Activated CD4-positive, alpha-beta T cell treated with anti-CD3 and anti-CD28 coated beads for 36 hours (primary cell): ENCODE measurements at regions of chr11 and their contacts with region 1.

Region 1: DNA sequence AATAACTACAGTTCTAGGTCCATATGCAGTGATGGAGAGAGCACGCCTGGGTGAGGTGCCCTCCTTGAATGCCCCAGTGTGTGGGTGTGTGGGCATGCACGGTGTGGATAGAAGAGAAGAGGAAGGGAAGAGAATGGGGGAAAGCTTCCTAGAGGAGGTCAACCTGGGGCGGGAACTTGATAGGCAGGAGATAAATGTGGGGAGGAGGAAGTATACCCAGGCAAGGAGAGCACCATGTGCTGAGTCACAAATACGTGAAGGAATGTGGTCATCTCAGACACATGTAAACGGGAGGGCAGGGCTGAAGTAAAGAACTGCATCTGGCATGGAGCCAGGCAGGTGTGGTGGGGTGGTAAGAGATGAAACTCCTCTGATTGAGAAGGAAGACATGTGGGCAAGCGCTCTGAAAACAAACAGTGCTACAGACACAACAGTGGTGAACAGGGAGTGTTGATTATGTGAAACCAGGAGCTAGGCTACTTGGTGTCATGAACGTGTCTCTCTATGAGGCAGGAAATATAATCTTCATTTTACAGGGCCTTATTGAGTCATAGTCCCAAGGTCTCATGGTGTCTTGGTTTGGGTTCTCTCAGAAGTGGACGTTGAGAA is 61.5 kb upstream of the EED start:
- DNase-seq: peak; percentile 89
- ATAC-seq: peak; percentile 84
- H3K4me3 Mint-ChIP-seq: no peak overlapping the region
- H3K27ac Mint-ChIP-seq: no peak overlapping the region
- H3K4me1 Mint-ChIP-seq: peaks cover 6% of the 10 kb centered on the region
- H3K27me3 Mint-ChIP-seq: no peaks in the 10 kb centered on the region

Region 2: GRCh38 chr11:86202013-86202336 is 18.9 kb after region 1 on chr11:
- CTCF ChIA-PET with region 1: interaction called, 4 read pairs
- POLR2A ChIA-PET with region 1: no interaction called
- intact Hi-C with region 1: loop called in 1 of 2 experiments (anchors 1 kb)
- DNase-seq: peak; percentile 39
- ATAC-seq: peak; percentile 94
- H3K4me3 Mint-ChIP-seq: no peak overlapping the region
- H3K27ac Mint-ChIP-seq: no peak overlapping the region
- H3K4me1 Mint-ChIP-seq: peaks cover 6% of the 10 kb centered on the region
- H3K27me3 Mint-ChIP-seq: peaks cover under 1% of the 10 kb centered on the region